ENCODE measurements at regions of chr17 and their contacts with region 1.

Region 1: GRCh38 chr17:48593840-48594537 is 410 bp upstream of the HOXB5 start:
- DNase-seq: peak; percentile 86
- ATAC-seq: peak; percentile 65
- H3K4me3 Mint-ChIP-seq: peak overlapping the region; percentile 76
- H3K27ac Mint-ChIP-seq: peak overlapping the region; percentile 23
- H3K4me1 Mint-ChIP-seq: peaks cover 44% of the 10 kb centered on the region
- H3K27me3 Mint-ChIP-seq: peaks cover 76% of the 10 kb centered on the region

Region 2: GRCh38 chr17:48131216-48131824 is 462.7 kb before region 1 on chr17:
- CTCF ChIA-PET with region 1: interaction called, 10 read pairs
- POLR2A ChIA-PET with region 1: no interaction called
- DNase-seq: peak; percentile 70
- ATAC-seq: peak; percentile 80
- H3K4me3 Mint-ChIP-seq: no peak overlapping the region
- H3K27ac Mint-ChIP-seq: peak overlapping the region; percentile 39
- H3K4me1 Mint-ChIP-seq: peaks cover 5% of the 10 kb centered on the region
- H3K27me3 Mint-ChIP-seq: no peaks in the 10 kb centered on the region

Region 3: GRCh38 chr17:48307814-48308411 is 286.1 kb before region 1 on chr17:
- CTCF ChIA-PET with region 1: interaction called, 32 read pairs
- POLR2A ChIA-PET with region 1: no interaction called
- DNase-seq: peak; percentile 63
- ATAC-seq: peak; percentile 74
- H3K4me3 Mint-ChIP-seq: no peak overlapping the region
- H3K27ac Mint-ChIP-seq: no peak overlapping the region
- H3K4me1 Mint-ChIP-seq: peaks cover 2% of the 10 kb centered on the region
- H3K27me3 Mint-ChIP-seq: no peaks in the 10 kb centered on the region

Region 4: DNA sequence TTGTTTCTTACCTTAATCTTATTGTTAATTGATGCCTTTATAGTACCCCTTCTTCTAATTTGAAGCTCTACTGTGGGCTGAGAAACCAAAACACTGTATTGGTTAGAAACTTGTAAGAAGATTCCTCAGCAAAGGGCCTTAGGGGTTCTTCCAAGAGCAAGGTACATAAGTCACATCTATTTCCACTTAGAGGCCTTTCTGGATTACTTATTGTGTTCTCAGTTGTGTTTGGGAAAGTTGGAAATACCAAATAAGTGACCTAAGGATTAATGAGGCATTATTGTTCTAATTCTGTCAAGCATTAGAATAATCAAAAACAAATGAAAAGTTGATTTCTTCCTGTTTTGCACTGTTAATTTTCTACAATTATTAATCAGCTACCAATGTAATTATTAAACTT is 249.7 kb before region 1 on chr17:
- CTCF ChIA-PET with region 1: interaction called, 59 read pairs
- POLR2A ChIA-PET with region 1: no interaction called
- DNase-seq: no peak
- ATAC-seq: no peak
- H3K4me3 Mint-ChIP-seq: no peak overlapping the region
- H3K27ac Mint-ChIP-seq: no peak overlapping the region
- H3K4me1 Mint-ChIP-seq: peaks cover 16% of the 10 kb centered on the region
- H3K27me3 Mint-ChIP-seq: no peaks in the 10 kb centered on the region

Region 5: DNA sequence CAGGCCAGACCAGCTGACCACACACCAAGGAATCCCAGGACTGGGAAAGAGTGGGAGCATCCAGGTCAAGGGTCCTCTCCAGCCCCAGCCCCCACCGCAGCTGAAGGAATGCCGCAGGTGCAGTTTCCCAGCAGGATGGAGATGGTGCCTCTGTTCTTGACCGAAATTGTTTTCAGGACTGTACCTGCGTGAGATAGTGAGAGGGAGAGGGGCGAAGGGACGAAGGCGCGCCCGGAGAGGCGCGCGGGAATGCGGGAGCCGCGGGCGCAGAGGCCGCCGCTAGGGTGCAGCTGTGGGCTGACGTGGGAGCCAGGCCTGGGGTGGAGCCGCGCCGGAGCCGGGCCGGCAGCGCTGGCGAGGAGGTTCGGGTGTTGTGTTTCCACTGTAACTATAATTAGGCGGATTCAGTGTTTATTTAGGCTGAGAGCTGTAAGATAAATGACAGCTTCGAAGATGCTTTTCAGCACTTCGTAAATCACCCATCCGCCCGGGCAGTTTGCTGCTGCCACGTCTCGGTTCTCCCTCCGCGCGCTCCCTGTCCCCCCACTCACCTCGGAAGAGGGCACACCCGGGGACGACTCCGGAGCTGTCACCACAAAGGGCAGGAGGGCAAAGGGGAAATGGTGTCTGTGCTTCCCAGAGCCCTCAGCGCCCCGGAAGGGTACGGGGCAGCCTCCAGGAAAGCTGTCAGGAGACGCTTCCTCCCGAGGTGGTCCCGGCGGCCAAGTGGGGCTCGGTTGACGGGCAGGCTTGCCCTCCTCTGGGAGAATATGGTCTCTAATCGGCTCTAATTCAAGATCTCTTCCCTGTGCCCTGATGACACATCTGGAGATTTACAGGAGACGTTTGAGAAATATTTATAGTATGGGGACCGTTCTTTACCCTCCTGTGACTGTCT is 101.3 kb before region 1 on chr17:
- CTCF ChIA-PET with region 1: interaction called, 33 read pairs
- POLR2A ChIA-PET with region 1: no interaction called
- DNase-seq: peak; percentile 75
- ATAC-seq: peak; percentile 96
- H3K4me3 Mint-ChIP-seq: peak overlapping the region; percentile 65
- H3K27ac Mint-ChIP-seq: no peak overlapping the region
- H3K4me1 Mint-ChIP-seq: peaks cover 39% of the 10 kb centered on the region
- H3K27me3 Mint-ChIP-seq: peaks cover 23% of the 10 kb centered on the region

Region 6: GRCh38 chr17:48618256-48618897 is 24.4 kb after region 1 on chr17:
- CTCF ChIA-PET with region 1: interaction called, 24 read pairs
- POLR2A ChIA-PET with region 1: no interaction called
- DNase-seq: peak; percentile 86
- ATAC-seq: peak; percentile 69
- H3K4me3 Mint-ChIP-seq: peak overlapping the region; percentile 27
- H3K27ac Mint-ChIP-seq: no peak overlapping the region
- H3K4me1 Mint-ChIP-seq: peaks cover 39% of the 10 kb centered on the region
- H3K27me3 Mint-ChIP-seq: peaks cover 87% of the 10 kb centered on the region

Measured in activated CD8-positive, alpha-beta T cell treated with anti-CD3 and anti-CD28 coated beads, Interleukin-2, amount 10 ng/mL, durations not matched to agents 7 days and 5 days (primary cell).